Activated CD4-positive, alpha-beta T cell treated with anti-CD3 and anti-CD28 coated beads for 36 hours (primary cell): ENCODE measurements at regions of chr6 and their contacts with region 1.

Region 1: GRCh38 chr6:37202788-37203491 is 33.0 kb downstream of the PIM1 start:
- DNase-seq: no peak
- ATAC-seq: peak; percentile 68
- H3K4me3 Mint-ChIP-seq: no peak overlapping the region
- H3K27ac Mint-ChIP-seq: peak overlapping the region; percentile 39
- H3K4me1 Mint-ChIP-seq: peaks cover 59% of the 10 kb centered on the region
- H3K27me3 Mint-ChIP-seq: no peaks in the 10 kb centered on the region

Region 2: DNA sequence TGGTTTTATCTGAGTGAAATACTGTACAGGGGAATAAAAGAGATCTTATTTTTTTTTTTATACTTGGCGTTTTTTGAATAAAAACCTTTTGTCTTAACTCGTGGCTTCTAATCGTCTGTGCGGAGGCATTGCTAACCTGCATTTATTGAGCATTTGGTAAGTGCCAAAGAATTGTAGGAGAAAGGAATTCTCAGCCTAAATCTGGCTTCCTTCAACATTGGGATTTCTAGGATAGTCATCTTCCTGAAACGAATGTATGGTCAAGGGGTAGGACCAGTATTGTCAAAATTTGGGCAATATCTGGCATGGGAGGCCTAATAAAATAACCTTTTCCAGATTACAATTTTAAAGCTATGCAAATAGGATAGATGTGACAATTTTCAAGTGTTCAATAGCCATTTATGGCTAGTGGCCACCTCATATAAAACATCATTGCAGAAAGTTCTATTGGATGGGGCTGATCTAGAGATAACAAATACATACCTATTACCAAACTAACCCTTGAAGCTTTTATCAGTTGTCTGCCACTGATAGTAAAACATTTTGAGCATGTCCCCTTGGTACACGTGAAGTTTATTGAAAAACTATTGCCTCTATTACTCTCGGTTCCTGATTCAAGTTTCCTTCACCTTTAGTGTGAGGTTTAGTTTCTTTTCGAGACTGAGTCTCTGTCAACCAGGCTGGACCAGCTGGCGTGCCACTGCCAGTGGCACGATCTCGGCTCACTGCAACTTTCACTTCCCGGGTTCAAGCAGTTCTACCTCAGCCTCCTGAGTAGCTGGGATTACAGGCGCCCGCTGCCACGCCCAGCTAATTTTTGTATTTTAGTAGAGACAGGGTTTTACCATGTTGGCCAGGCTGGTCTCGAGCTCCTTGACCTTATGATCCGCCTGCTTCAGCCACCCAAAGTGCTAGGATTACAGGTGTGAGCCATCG is 27.3 kb before region 1 on chr6:
- CTCF ChIA-PET with region 1: interaction called, 240 read pairs
- POLR2A ChIA-PET with region 1: interaction called, 34 read pairs
- intact Hi-C with region 1: loop called (anchors 1 kb)
- DNase-seq: peak; percentile 30
- ATAC-seq: no peak
- H3K4me3 Mint-ChIP-seq: peak overlapping the region; percentile 91
- H3K27ac Mint-ChIP-seq: peak overlapping the region; percentile 96
- H3K4me1 Mint-ChIP-seq: peaks cover 51% of the 10 kb centered on the region
- H3K27me3 Mint-ChIP-seq: no peaks in the 10 kb centered on the region

Region 3: DNA sequence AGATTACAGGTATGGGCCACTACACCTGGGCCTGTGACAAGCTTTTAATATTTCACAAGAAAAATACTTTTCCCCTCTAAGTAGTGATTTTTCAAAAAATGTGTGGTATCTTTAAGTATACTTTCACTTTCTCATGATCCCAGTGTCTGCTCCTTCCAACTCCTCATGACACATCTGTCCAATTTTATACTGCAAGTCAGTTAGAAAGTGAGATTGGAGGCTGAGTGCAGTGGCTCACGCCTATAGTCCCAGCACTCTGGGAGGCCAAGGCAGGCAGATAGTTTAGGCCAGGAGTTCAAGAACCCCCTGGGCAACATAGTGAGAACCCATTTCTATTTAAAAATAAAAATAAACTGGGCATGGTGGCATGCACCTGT is 12.8 kb before region 1 on chr6:
- CTCF ChIA-PET with region 1: interaction called, 10 read pairs
- POLR2A ChIA-PET with region 1: interaction called, 6 read pairs
- intact Hi-C with region 1: loop called (anchors 1 to 2 kb)
- DNase-seq: peak; percentile 62
- ATAC-seq: peak; percentile 75
- H3K4me3 Mint-ChIP-seq: no peak overlapping the region
- H3K27ac Mint-ChIP-seq: peak overlapping the region; percentile 3
- H3K4me1 Mint-ChIP-seq: peaks cover 71% of the 10 kb centered on the region
- H3K27me3 Mint-ChIP-seq: no peaks in the 10 kb centered on the region

Region 4: DNA sequence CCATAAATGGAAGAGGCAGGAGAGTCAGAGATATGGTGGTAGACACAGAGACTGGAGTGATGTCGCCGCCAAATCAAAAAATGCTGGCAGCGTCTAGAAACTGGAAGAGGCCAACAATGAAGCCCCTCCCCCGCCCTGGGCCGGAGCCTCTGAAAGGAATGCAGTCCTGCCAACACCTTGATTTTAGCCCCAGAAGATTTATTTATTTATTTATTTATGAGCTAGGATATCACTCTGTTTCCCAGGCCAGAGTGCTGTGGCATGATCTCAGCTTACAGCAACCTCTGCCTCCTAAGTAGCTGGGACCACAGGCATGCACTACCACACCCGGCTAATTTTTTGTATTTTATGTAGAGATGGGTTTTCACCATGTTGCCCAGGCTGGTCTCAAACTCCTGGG is 379.4 kb after region 1 on chr6:
- CTCF ChIA-PET with region 1: no interaction called
- POLR2A ChIA-PET with region 1: no interaction called
- intact Hi-C with region 1: no loop called
- DNase-seq: no peak
- ATAC-seq: no peak
- H3K4me3 Mint-ChIP-seq: no peak overlapping the region
- H3K27ac Mint-ChIP-seq: no peak overlapping the region
- H3K4me1 Mint-ChIP-seq: no peaks in the 10 kb centered on the region
- H3K27me3 Mint-ChIP-seq: no peaks in the 10 kb centered on the region